Psoas muscle (tissue), 8 donors: ENCODE measurements at regions of chr12 and their contacts with region 1.

Region 1: DNA sequence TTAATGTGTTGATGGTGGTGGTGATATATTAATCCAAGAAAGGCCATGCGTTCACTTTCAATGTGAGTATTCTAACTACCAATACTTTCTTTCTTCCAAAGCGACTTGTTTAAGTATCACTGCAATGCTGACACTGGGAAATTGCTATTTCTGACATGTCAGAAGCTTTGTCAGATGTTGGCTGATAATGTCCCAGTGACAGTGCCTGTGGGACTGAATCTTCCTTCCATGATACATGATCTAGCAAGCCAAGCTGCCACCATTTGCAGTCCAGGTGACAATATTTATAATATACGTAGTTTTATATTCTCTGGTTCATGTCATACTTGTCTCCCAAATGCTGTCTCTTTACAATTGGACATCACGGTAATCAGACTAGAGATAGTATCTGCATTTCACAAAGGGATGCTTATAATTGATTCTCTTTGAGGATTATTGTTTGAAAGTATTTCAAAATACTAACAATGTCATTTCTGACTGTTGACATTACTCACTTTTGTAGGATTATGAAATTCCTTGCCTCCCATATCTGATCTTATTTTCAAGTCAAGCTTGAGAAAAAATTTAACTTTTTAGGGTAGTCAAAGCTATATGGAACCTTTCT is 57.2 kb downstream of the KNTC1 start:
- DNase-seq: no peak
- ATAC-seq: no peak
- H3K4me3 ChIP-seq: no peak overlapping the region
- H3K27ac ChIP-seq: no peak overlapping the region
- H3K4me1 ChIP-seq: no peaks in the 10 kb centered on the region
- H3K27me3 ChIP-seq: no peaks in the 10 kb centered on the region
- CTCF ChIP-seq: no peak

Region 2: GRCh38 chr12:122604993-122605392 is 20.7 kb after region 1 on chr12:
- intact Hi-C with region 1: loop called in 1 of 2 experiments (anchors 2 kb)
- DNase-seq: no peak
- ATAC-seq: no peak
- H3K4me3 ChIP-seq: no peak overlapping the region
- H3K27ac ChIP-seq: no peak overlapping the region
- H3K4me1 ChIP-seq: no peaks in the 10 kb centered on the region
- H3K27me3 ChIP-seq: no peaks in the 10 kb centered on the region
- CTCF ChIP-seq: no peak